ENCODE measurements at regions of chr18 and their contacts with region 1.

Region 1: DNA sequence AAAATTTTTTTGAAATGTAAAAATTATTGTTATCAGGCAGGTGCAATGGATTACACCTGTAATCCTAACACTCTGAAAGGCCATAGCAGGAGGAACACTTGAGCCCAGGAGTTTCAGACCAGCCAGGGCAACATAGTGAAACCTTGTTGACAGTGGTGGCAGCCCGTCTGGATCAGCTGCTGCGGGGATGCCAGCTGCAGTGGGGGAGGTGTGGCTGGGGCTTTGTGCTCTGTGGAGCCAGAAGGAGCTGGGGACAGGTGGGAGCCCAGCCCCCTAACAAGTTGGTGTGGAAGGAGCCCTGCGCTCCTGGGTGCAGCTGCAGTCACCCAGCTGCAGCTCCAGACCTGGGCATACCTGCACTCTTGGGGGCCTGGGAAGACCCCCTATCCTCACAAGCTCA is 182.4 kb upstream of the MC4R start:
- DNase-seq: no peak
- ATAC-seq: no peak
- H3K4me3 ChIP-seq: no peak overlapping the region
- H3K27ac ChIP-seq: no peak overlapping the region
- H3K4me1 ChIP-seq: no peaks in the 10 kb centered on the region
- H3K27me3 ChIP-seq: no peaks in the 10 kb centered on the region
- CTCF ChIP-seq: no peak

Region 2: DNA sequence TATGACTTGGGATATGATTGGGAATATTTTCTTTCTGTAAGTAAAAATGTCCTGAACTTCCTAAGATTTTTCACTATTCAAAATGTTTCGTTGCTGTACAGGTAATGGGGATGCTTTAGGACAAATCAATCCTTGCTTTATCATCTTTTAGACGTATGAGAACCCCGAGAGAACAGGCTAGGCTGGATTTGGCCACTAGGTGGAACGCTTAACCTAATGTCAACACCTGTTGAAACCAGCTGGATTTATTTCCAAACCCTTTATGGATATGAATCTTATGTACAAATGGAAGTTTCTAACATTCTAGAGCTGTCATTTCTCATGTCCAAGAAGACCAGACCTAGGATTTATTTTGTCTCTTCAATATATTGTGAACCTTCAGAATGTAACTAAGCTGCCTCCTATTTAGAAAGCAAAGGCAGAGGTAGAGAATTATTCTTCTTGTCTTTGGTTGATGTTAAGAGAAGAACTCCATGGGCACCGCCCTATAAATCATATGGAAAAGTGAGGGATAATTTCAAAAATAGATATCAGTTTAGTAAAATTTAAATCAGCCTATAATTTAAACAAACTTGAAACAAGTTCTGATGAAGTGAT is 558.5 kb before region 1 on chr18:
- intact Hi-C with region 1: loop called in 1 of 2 experiments (anchors 10 kb)
- DNase-seq: peak in 1 of 4 donors; percentile 35
- ATAC-seq: peak; percentile 75
- H3K4me3 ChIP-seq: no peak overlapping the region
- H3K27ac ChIP-seq: no peak overlapping the region
- H3K4me1 ChIP-seq: no peaks in the 10 kb centered on the region
- H3K27me3 ChIP-seq: peaks cover 0 to 6% of the 10 kb centered on the region in 2 donors
- CTCF ChIP-seq: peak; percentile 30 to 43

Measured in left lung (tissue), 14 donors.